Lower leg skin (tissue), 4 donors: ENCODE measurements at regions of chr6 and their contacts with region 1.

Region 1: GRCh38 chr6:85997206-85997605 is 354.5 kb upstream of the SYNCRIP start:
- DNase-seq: no peak
- H3K4me3 ChIP-seq: no peak overlapping the region
- CTCF ChIP-seq: no peak
- POLR2A ChIP-seq: no peak

Region 2: DNA sequence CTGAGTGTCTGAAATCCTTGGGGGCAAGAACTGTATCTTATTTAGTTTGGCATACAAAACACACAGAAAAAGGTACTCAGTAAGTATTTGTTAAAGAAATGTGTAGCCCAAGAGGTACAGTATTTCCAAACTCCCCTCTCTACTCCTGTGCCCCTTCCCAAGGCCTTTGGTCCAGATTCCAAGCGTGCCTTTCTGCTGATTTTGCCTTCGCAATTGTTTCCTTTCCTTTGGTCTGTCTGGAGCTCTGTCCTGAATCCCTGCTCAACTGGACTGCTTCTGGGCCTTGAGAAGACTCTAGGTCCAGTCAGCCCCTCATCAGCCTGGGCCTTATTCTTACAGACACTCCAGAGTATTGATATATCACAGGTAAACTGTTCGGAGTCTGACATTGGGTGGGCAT is 232.4 kb before region 1 on chr6:
- intact Hi-C with region 1: no loop called
- DNase-seq: no peak
- H3K4me3 ChIP-seq: no peak overlapping the region
- CTCF ChIP-seq: no peak
- POLR2A ChIP-seq: no peak

Region 3: DNA sequence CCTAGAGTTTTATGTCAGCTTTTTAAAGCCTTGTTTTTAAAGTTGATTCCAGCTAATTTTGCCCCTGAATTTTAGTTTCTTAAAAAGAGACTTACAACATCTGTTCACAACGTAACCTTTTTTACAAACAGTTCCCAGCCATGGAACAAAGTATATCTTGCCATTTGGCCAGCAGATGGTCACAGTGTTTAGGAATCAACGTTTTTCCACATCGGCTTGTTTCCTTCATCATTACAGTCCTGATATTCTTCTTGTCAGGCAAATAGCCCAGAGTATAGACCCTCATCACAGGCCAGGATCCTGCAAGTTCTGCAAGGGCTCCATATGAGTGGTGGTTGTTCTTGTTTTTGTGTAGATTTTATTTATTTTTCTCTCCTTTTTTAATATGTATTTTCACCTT is 598.4 kb after region 1 on chr6:
- intact Hi-C with region 1: loop called (anchors 5 kb)
- DNase-seq: no peak
- H3K4me3 ChIP-seq: no peak overlapping the region
- CTCF ChIP-seq: no peak
- POLR2A ChIP-seq: no peak